ENCODE measurements at regions of chr15 and their contacts with region 1.

Region 1: GRCh38 chr15:36897834-36898233 is 202.5 kb downstream of the MEIS2 start:
- DNase-seq: no peak
- H3K4me3 ChIP-seq: no peak overlapping the region
- CTCF ChIP-seq: no peak

Region 2: GRCh38 chr15:36769098-36769497 is 128.7 kb before region 1 on chr15:
- CTCF ChIA-PET with region 1: no interaction called
- POLR2A ChIA-PET with region 1: no interaction called
- DNase-seq: peak; percentile 12
- H3K4me3 ChIP-seq: no peak overlapping the region
- CTCF ChIP-seq: no peak

Region 3: DNA sequence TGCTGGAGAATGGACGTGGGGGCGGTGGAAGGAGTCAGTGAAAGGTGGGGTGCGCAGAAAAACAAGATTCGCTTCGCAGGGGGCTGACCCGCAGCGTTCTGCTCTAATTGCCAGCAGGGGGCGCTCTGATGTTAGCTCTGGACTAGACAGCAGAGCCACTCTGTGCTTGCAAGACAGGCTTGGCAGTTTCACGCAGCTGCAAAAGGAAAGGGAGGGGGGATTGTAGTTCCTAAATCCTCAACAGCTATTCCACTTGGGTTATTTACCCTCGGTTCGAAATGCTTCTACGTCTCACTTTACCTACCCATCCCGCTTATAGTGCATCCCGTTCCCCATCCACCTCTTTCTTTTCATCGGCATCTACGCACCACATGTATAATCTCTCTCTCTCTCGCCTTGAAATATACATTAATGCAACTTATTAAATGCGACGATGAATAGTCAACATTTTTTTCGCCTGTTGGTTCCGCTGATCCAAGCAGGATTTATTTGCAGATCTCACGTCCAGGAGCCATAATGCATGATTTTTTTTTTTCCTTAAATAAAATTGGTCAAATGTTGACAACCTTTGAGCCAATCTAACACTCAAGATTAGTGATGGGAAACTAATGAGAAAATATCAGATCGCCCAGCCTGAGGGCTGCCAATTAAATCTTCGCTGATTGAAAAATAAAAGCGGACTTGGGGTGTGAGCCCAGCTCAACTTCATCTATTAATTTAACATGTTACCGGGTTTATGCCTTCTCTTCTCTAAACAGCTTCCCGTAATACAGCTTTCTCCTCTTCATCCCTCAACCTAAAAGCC is 13.9 kb before region 1 on chr15:
- CTCF ChIA-PET with region 1: interaction called, 19 read pairs
- POLR2A ChIA-PET with region 1: no interaction called
- DNase-seq: peak; percentile 42
- H3K4me3 ChIP-seq: peak overlapping the region; percentile 44
- CTCF ChIP-seq: peak; percentile 90